Activated B cell treated with CpG ODN at 0.5 μM for 24 hours (primary cell): ENCODE measurements at regions of chr2 and their contacts with region 1.

Region 1: DNA sequence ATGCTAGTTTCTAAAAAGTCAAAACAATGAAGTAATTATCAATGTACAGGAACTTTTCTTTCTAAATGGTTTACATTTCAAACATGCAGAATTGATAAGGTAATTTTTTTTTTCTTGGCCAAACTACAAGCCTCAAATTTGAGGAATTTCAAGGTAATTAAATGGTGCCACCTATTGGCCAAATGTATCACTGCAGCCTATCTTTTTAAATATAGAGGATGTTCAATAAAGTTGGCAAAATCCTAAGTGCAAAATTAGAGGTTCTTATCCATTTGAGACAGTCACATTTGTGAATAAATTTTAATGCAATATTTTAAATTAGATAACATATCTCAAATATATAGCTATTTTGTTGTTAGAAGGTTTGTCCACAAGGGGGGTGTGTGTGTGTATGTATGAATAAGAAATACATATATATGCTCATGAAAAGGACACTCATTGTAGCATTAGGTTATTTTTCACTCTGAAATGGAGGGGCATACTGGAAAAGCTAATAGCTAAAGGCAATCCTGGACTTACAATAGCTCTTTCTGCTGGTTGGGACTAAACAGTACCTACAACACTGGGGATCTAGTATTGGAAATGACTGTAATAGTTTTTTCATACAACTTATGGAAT is 26.2 kb downstream of the MMADHC start:
- DNase-seq: no peak
- ATAC-seq: peak; percentile 31
- H3K4me3 Mint-ChIP-seq: no peak overlapping the region
- H3K27ac Mint-ChIP-seq: no peak overlapping the region
- H3K4me1 Mint-ChIP-seq: peaks cover 8% of the 10 kb centered on the region
- H3K27me3 Mint-ChIP-seq: no peaks in the 10 kb centered on the region
- CTCF ChIP-seq: peak; percentile 100

Region 2: DNA sequence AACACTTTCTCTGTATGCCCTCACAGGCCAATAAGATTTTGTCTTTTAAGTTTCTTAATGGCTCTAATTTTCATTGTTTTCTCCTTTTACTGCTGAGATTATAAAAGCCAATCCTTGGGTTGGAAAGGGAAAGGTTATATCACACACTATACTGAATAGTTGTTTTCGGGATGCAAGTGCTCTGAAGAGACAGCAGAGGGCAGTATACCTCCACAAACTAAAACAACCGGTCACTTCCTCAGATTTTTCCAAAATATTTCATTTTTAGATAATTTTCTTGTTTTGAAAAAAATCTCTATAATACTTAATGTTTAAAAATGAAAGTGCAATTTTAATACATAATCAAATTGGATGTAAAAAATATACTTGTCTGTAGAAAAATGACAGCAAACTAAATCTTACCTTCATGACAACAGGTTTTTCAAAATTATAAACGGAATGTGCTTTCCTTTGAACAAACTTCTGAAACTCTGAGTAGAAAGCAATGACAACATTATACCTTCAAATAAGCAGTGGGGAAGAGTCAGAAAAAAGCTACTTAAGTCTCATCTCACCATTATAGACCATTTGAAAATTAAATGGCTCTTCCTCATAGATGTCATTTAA is 1623.6 kb before region 1 on chr2:
- CTCF ChIA-PET with region 1: interaction called, 4 read pairs
- POLR2A ChIA-PET with region 1: no interaction called
- intact Hi-C with region 1: loop called (anchors 1 kb)
- DNase-seq: no peak
- ATAC-seq: peak; percentile 37
- H3K4me3 Mint-ChIP-seq: no peak overlapping the region
- H3K27ac Mint-ChIP-seq: no peak overlapping the region
- H3K4me1 Mint-ChIP-seq: no peaks in the 10 kb centered on the region
- H3K27me3 Mint-ChIP-seq: no peaks in the 10 kb centered on the region
- CTCF ChIP-seq: peak; percentile 95

Region 3: GRCh38 chr2:148565272-148565894 is 996.0 kb before region 1 on chr2:
- CTCF ChIA-PET with region 1: no interaction called
- POLR2A ChIA-PET with region 1: no interaction called
- intact Hi-C with region 1: loop called (anchors 1 kb)
- DNase-seq: no peak
- ATAC-seq: no peak
- H3K4me3 Mint-ChIP-seq: no peak overlapping the region
- H3K27ac Mint-ChIP-seq: no peak overlapping the region
- H3K4me1 Mint-ChIP-seq: no peaks in the 10 kb centered on the region
- H3K27me3 Mint-ChIP-seq: peaks cover 2% of the 10 kb centered on the region
- CTCF ChIP-seq: no peak

Region 4: GRCh38 chr2:148770047-148770446 is 791.4 kb before region 1 on chr2:
- CTCF ChIA-PET with region 1: no interaction called
- POLR2A ChIA-PET with region 1: no interaction called
- intact Hi-C with region 1: loop called (anchors 10 kb)
- DNase-seq: no peak
- ATAC-seq: no peak
- H3K4me3 Mint-ChIP-seq: no peak overlapping the region
- H3K27ac Mint-ChIP-seq: no peak overlapping the region
- H3K4me1 Mint-ChIP-seq: no peaks in the 10 kb centered on the region
- H3K27me3 Mint-ChIP-seq: no peaks in the 10 kb centered on the region
- CTCF ChIP-seq: no peak

Region 5: GRCh38 chr2:148926291-148926961 is 635.0 kb before region 1 on chr2:
- CTCF ChIA-PET with region 1: interaction called, 3 read pairs
- POLR2A ChIA-PET with region 1: no interaction called
- intact Hi-C with region 1: loop called (anchors 1 kb)
- DNase-seq: peak; percentile 24
- ATAC-seq: peak; percentile 88
- H3K4me3 Mint-ChIP-seq: peak overlapping the region; percentile 79
- H3K27ac Mint-ChIP-seq: peak overlapping the region; percentile 76
- H3K4me1 Mint-ChIP-seq: peaks cover 16% of the 10 kb centered on the region
- H3K27me3 Mint-ChIP-seq: no peaks in the 10 kb centered on the region
- CTCF ChIP-seq: no peak